ENCODE measurements at regions of chr11 and their contacts with region 1.

Region 1: GRCh38 chr11:22006901-22007300 is 186.0 kb upstream of the ANO5 start:
- DNase-seq: no peak
- ATAC-seq: no peak
- H3K4me3 ChIP-seq: no peak overlapping the region
- H3K27ac ChIP-seq: no peak overlapping the region
- H3K4me1 ChIP-seq: no peaks in the 10 kb centered on the region
- H3K27me3 ChIP-seq: no peaks in the 10 kb centered on the region
- CTCF ChIP-seq: no peak

Region 2: DNA sequence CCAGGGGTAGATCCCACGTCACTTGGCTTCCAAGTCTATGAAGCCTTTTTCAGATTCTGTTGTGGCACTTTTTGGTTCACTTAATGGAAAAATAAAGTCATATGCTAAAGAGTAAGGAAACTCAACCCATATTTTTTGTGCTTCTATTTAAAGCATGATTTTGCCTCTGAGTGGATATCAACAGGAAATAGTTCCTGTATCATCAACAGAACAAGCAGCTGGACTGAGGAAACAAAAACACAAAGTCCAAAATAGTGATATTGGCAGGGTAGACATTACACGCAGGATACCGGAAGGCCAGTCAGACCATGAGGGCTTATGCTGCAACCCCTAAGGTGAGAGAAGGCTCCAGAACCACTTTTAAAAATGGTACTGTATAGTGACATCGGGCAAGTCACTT is 62.3 kb before region 1 on chr11:
- intact Hi-C with region 1: loop called in 1 of 2 experiments (anchors 5 kb)
- DNase-seq: no peak
- ATAC-seq: no peak
- H3K4me3 ChIP-seq: no peak overlapping the region
- H3K27ac ChIP-seq: no peak overlapping the region
- H3K4me1 ChIP-seq: no peaks in the 10 kb centered on the region
- H3K27me3 ChIP-seq: no peaks in the 10 kb centered on the region
- CTCF ChIP-seq: no peak

Region 3: GRCh38 chr11:22216940-22217339 is 210.0 kb after region 1 on chr11:
- intact Hi-C with region 1: no loop called
- DNase-seq: no peak
- ATAC-seq: peak in 2 of 4 donors; percentile 53 to 66
- H3K4me3 ChIP-seq: no peak overlapping the region
- H3K27ac ChIP-seq: peak overlapping the region; percentile 26
- H3K4me1 ChIP-seq: no peaks in the 10 kb centered on the region
- H3K27me3 ChIP-seq: no peaks in the 10 kb centered on the region
- CTCF ChIP-seq: no peak

Region 4: DNA sequence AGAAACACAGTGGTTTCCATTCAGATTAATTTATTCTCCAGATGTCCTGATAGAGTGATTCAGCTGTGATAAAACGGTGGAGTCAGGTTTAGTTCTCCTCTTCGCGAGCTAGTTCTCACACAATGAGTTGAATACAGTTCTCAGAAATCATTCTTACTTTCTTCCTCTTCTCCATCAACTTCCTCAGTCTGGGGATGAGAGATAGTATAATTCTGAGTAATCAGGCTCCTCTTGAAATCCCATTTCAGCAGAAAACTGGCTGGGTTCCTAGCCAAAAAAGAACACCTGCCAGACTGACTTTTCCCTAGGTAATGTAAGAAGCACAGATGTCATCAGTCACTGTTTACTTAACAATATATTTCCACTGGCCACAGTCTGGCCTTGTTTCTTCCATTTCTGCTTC is 746.0 kb after region 1 on chr11:
- intact Hi-C with region 1: loop called in 1 of 2 experiments (anchors 10 kb)
- DNase-seq: no peak
- ATAC-seq: no peak
- H3K4me3 ChIP-seq: no peak overlapping the region
- H3K27ac ChIP-seq: no peak overlapping the region
- H3K4me1 ChIP-seq: no peaks in the 10 kb centered on the region
- H3K27me3 ChIP-seq: no peaks in the 10 kb centered on the region
- CTCF ChIP-seq: no peak

Region 5: GRCh38 chr11:22860241-22860640 is 853.3 kb after region 1 on chr11 and contains the start of gene CCDC179:
- intact Hi-C with region 1: no loop called
- DNase-seq: no peak
- ATAC-seq: no peak
- H3K4me3 ChIP-seq: no peak within 1 kb of the TSS
- H3K27ac ChIP-seq: no peak within 1 kb of the TSS
- H3K4me1 ChIP-seq: no peaks in the 10 kb centered on the region
- H3K27me3 ChIP-seq: no peaks in the 10 kb centered on the region
- CTCF ChIP-seq: no peak
- total RNA-seq, gene CCDC179: not detected